Activated naive CD4-positive, alpha-beta T cell treated with anti-CD3 and anti-CD28 coated beads for 36 hours (primary cell): ENCODE measurements at regions of chr3 and their contacts with region 1.

Region 1: GRCh38 chr3:9179826-9180763 is 69.4 kb downstream of the SRGAP3 start:
- DNase-seq: peak; percentile 57
- H3K4me3 Mint-ChIP-seq: peak overlapping the region; percentile 58
- H3K27ac Mint-ChIP-seq: peak overlapping the region; percentile 54
- H3K4me1 Mint-ChIP-seq: peaks cover 19% of the 10 kb centered on the region
- H3K27me3 Mint-ChIP-seq: no peaks in the 10 kb centered on the region

Region 2: GRCh38 chr3:8963137-8963869 is 216.8 kb before region 1 on chr3 and contains the start of gene RAD18:
- CTCF ChIA-PET with region 1: no interaction called
- intact Hi-C with region 1: loop called (anchors 5 kb)
- DNase-seq: peak; percentile 95
- H3K4me3 Mint-ChIP-seq: peak within 1 kb of the TSS; percentile 97
- H3K27ac Mint-ChIP-seq: peak within 1 kb of the TSS; percentile 94
- H3K4me1 Mint-ChIP-seq: peaks cover 35% of the 10 kb centered on the region
- H3K27me3 Mint-ChIP-seq: no peaks in the 10 kb centered on the region
- total RNA-seq, gene RAD18: 44.5 to 45.4 TPM

Region 3: GRCh38 chr3:9196020-9196419 is 15.9 kb after region 1 on chr3:
- CTCF ChIA-PET with region 1: no interaction called
- intact Hi-C with region 1: no loop called
- DNase-seq: no peak
- H3K4me3 Mint-ChIP-seq: no peak overlapping the region
- H3K27ac Mint-ChIP-seq: no peak overlapping the region
- H3K4me1 Mint-ChIP-seq: no peaks in the 10 kb centered on the region
- H3K27me3 Mint-ChIP-seq: no peaks in the 10 kb centered on the region

Region 4: GRCh38 chr3:9214599-9214998 is 34.5 kb after region 1 on chr3:
- CTCF ChIA-PET with region 1: no interaction called
- intact Hi-C with region 1: no loop called
- DNase-seq: no peak
- H3K4me3 Mint-ChIP-seq: no peak overlapping the region
- H3K27ac Mint-ChIP-seq: no peak overlapping the region
- H3K4me1 Mint-ChIP-seq: no peaks in the 10 kb centered on the region
- H3K27me3 Mint-ChIP-seq: no peaks in the 10 kb centered on the region